ENCODE measurements at regions of chr2 and their contacts with region 1.

Region 1: GRCh38 chr2:120680136-120680761 is 55.4 kb upstream of the GLI2 start:
- DNase-seq: peak; percentile 85 to 87
- H3K4me3 ChIP-seq: no peak overlapping the region
- H3K4me3 Mint-ChIP-seq: peak overlapping the region; percentile 24
- H3K27ac Mint-ChIP-seq: peak overlapping the region; percentile 50
- H3K4me1 ChIP-seq: no peaks in the 10 kb centered on the region
- H3K4me1 Mint-ChIP-seq: peaks cover 4% of the 10 kb centered on the region
- H3K27me3 ChIP-seq: no peaks in the 10 kb centered on the region
- H3K27me3 Mint-ChIP-seq: no peaks in the 10 kb centered on the region
- CTCF ChIP-seq: peak; percentile 73 to 75

Region 2: GRCh38 chr2:120252225-120253021 is 427.8 kb before region 1 on chr2 and contains the start of gene RALB:
- CTCF ChIA-PET with region 1: interaction called, 3 read pairs
- POLR2A ChIA-PET with region 1: no interaction called
- intact Hi-C with region 1: loop called (anchors 1 kb)
- DNase-seq: peak; percentile 100
- H3K4me3 ChIP-seq: peak within 1 kb of the TSS; percentile 79
- H3K4me3 Mint-ChIP-seq: peak within 1 kb of the TSS; percentile 82
- H3K27ac Mint-ChIP-seq: peak within 1 kb of the TSS; percentile 68
- H3K4me1 ChIP-seq: peaks cover 18% of the 10 kb centered on the region
- H3K4me1 Mint-ChIP-seq: peaks cover 27% of the 10 kb centered on the region
- H3K27me3 ChIP-seq: no peaks in the 10 kb centered on the region
- H3K27me3 Mint-ChIP-seq: no peaks in the 10 kb centered on the region
- CTCF ChIP-seq: no peak
- total RNA-seq, gene RALB: 56.5 and 59.4 TPM in 2 replicates

Region 3: GRCh38 chr2:120436885-120437603 is 243.2 kb before region 1 on chr2:
- CTCF ChIA-PET with region 1: interaction called, 3 read pairs
- POLR2A ChIA-PET with region 1: no interaction called
- intact Hi-C with region 1: loop called (anchors 1 kb)
- DNase-seq: peak; percentile 88 to 89
- H3K4me3 ChIP-seq: no peak overlapping the region
- H3K4me3 Mint-ChIP-seq: no peak overlapping the region
- H3K27ac Mint-ChIP-seq: peak overlapping the region; percentile 33
- H3K4me1 ChIP-seq: peaks cover 16% of the 10 kb centered on the region
- H3K4me1 Mint-ChIP-seq: peaks cover 33% of the 10 kb centered on the region
- H3K27me3 ChIP-seq: no peaks in the 10 kb centered on the region
- H3K27me3 Mint-ChIP-seq: no peaks in the 10 kb centered on the region
- CTCF ChIP-seq: peak; percentile 82 to 89

Region 4: DNA sequence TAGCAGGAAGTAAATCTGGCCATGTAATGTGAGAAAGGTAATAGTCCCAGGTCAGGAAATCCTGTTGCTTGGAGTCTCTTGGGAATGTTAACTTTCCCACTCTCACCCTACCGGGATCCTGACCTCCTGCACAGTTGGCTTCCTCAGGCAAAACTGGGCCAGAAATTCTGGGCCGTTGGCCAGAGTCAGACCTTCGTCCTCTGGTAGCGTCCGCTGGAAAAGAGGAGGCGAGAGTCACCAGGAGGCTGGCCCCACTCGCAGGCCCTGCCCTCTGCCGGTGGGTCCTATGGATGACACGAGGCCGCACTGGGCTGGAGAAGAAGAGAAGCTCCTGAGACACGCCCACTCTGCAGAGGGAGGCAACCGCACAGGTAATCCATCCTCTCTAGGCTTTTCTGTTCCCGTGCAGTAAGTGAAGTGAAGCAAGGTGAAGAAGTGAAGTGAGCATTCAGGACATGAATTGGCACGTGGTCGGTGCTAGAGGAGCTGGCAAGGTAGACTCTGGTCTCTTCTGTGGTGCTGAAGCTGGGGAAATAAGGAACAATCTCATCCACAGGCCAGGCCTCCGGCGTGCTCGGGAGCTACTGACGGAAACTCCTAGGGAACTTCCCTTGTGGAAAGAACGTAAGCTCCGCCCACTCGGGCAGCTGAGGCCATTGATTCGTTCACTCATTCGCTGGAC is 127.3 kb before region 1 on chr2:
- CTCF ChIA-PET with region 1: interaction called, 8 read pairs
- POLR2A ChIA-PET with region 1: no interaction called
- intact Hi-C with region 1: loop called (anchors 2 kb)
- DNase-seq: peak; percentile 81 to 84
- H3K4me3 ChIP-seq: no peak overlapping the region
- H3K4me3 Mint-ChIP-seq: peak overlapping the region; percentile 13
- H3K27ac Mint-ChIP-seq: no peak overlapping the region
- H3K4me1 ChIP-seq: peaks cover 5% of the 10 kb centered on the region; the same call in 1 of the 2 replicates
- H3K4me1 Mint-ChIP-seq: peaks cover 17% of the 10 kb centered on the region
- H3K27me3 ChIP-seq: no peaks in the 10 kb centered on the region
- H3K27me3 Mint-ChIP-seq: no peaks in the 10 kb centered on the region
- CTCF ChIP-seq: peak; percentile 48 to 63

Region 5: DNA sequence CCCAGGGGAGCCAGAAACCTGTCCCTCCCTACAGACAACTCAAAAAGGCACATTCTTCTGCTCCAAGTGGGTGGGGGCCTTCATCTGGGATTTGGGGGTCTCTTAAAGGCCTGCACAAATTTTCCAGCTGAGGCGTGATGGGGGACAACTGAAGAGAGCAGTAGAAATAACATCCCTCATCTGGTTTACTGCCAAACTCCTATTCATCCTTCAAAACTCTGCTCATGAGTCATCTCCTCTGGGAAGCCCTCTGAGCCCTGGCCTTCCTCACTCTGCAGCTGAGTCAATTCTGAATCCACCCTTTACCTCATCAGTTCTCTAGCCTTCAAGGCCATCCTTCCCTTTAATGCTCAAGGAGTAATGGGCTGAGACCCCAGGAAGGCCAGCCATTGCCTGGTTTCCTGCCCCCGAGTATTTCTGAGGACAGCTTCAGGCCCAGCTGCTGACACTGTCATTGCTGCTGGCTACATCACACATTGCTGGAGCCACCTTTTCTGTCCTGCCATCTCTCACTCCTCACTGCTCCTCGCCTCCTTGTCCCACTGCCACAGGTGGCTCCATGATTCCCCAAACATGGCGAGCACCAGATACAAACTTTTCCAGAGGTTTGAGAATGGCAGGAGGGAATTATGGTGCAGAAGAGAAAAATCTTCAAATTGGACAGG is 23.2 kb after region 1 on chr2:
- CTCF ChIA-PET with region 1: no interaction called
- POLR2A ChIA-PET with region 1: no interaction called
- intact Hi-C with region 1: no loop called
- DNase-seq: no peak
- H3K4me3 ChIP-seq: no peak overlapping the region
- H3K4me3 Mint-ChIP-seq: no peak overlapping the region
- H3K27ac Mint-ChIP-seq: no peak overlapping the region
- H3K4me1 ChIP-seq: no peaks in the 10 kb centered on the region
- H3K4me1 Mint-ChIP-seq: peaks cover 6% of the 10 kb centered on the region
- H3K27me3 ChIP-seq: no peaks in the 10 kb centered on the region
- H3K27me3 Mint-ChIP-seq: peaks cover 12% of the 10 kb centered on the region
- CTCF ChIP-seq: no peak

Region 6: DNA sequence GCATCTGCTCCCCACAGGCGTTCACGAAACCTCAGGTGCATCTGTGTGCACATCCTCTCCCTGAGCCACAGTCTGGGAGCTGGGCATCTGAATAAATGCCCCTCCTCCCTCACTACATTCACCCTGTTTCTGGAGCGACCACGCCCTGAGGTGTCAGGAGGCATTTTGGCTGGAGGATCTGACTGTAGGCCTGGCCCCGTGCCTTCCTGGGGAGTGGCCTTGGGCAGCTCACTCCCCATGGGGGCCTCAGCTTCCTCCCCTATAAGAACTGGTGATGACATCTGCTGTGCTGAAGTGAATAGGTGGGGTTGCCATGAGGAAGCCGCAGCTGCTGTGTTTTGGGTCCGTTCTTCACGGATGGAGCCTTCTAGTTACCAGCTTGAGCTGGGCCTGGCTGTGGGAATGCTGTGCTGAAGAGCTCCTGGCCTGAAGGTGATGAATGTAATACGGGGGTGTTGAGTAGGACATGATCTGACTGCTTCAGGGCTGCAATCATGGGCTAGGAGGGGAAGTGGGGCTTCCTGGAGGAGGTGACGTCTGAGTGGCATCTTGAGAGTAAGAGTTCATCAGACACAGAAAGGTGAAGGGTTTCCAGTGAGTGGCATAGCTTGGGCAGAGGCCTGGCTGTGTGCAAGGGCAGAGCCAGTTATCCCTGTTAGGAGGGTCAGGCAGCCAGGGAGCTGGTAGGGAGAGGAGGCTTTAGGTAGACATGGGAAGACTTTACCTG is 113.6 kb after region 1 on chr2:
- CTCF ChIA-PET with region 1: no interaction called
- POLR2A ChIA-PET with region 1: no interaction called
- intact Hi-C with region 1: no loop called
- DNase-seq: no peak
- H3K4me3 ChIP-seq: no peak overlapping the region
- H3K4me3 Mint-ChIP-seq: no peak overlapping the region
- H3K27ac Mint-ChIP-seq: no peak overlapping the region
- H3K4me1 ChIP-seq: peaks cover 4% of the 10 kb centered on the region; the same call in 1 of the 2 replicates
- H3K4me1 Mint-ChIP-seq: peaks cover 12% of the 10 kb centered on the region
- H3K27me3 ChIP-seq: no peaks in the 10 kb centered on the region
- H3K27me3 Mint-ChIP-seq: no peaks in the 10 kb centered on the region
- CTCF ChIP-seq: no peak

Region 7: DNA sequence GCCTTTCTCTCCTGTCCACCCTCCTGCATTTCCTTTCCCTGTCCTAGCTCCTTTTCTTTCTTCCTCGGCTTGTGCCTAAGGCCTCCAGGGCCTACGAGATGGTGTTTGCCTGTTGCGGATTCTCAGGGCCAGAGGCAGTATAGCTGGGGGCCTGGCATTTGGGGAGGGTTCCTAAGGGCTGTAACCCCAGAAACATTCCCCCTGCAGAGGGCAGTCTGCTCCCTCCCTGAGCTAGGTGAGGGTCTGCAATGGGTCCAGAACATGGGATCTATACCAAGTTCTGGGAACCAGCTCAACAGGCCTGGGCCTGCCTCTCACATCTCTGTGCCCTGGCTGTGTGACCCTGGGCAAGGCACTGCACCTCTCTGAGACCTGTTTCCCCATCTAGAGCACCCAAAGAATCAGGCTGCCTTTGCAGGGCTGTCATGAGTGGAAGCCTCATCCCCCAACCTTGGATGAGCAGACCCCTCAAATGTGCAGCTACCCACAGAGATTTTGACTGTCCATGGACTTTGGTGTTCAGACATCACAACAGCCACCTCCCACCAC is 153.0 kb after region 1 on chr2:
- CTCF ChIA-PET with region 1: interaction called, 10 read pairs
- POLR2A ChIA-PET with region 1: no interaction called
- intact Hi-C with region 1: no loop called
- DNase-seq: no peak
- H3K4me3 ChIP-seq: no peak overlapping the region
- H3K4me3 Mint-ChIP-seq: no peak overlapping the region
- H3K27ac Mint-ChIP-seq: no peak overlapping the region
- H3K4me1 ChIP-seq: no peaks in the 10 kb centered on the region
- H3K4me1 Mint-ChIP-seq: no peaks in the 10 kb centered on the region
- H3K27me3 ChIP-seq: no peaks in the 10 kb centered on the region
- H3K27me3 Mint-ChIP-seq: no peaks in the 10 kb centered on the region
- CTCF ChIP-seq: peak in 1 of 2 experiments; percentile 6

Region 8: GRCh38 chr2:120957905-120958304 is 277.7 kb after region 1 on chr2:
- CTCF ChIA-PET with region 1: no interaction called
- POLR2A ChIA-PET with region 1: interaction called, 16 read pairs
- intact Hi-C with region 1: no loop called
- DNase-seq: no peak
- H3K4me3 ChIP-seq: no peak overlapping the region
- H3K4me3 Mint-ChIP-seq: no peak overlapping the region
- H3K27ac Mint-ChIP-seq: no peak overlapping the region
- H3K4me1 ChIP-seq: no peaks in the 10 kb centered on the region
- H3K4me1 Mint-ChIP-seq: no peaks in the 10 kb centered on the region
- H3K27me3 ChIP-seq: no peaks in the 10 kb centered on the region
- H3K27me3 Mint-ChIP-seq: no peaks in the 10 kb centered on the region
- CTCF ChIP-seq: no peak